Caco-2 (cell line): ENCODE measurements at regions of chr7 and their contacts with region 1.

Region 1: DNA sequence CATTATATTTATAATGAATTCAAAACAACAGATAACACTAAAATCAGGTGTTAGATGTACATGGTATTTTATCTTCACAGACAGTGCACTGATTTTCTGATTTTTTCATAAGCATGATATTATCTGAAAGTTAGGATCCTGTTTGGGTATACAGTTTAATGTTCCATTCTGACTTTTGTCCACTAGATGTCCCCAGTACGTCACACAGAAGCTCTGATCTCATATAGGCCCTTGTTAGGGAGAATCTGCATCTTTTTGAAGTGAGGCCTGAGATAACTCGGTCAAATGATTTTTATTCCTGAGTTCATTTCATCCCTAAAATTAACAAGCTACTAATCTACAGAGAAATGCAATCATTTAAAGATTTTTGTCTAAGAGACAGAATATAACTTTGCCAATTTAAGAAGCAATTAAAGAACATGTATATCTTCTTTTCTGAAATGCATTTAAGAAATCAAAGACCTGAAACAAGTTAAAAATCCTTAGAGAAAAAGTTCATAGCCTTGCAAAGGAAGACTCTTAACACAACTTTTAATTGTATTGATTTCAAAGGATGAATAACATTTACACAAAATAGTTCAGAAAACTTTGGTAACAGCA is 72.0 kb upstream of the TES start:
- DNase-seq: peak; percentile 44 to 69
- H3K4me3 ChIP-seq: no peak overlapping the region
- H3K4me3 Mint-ChIP-seq: no peak overlapping the region
- H3K27ac Mint-ChIP-seq: no peak overlapping the region
- H3K4me1 ChIP-seq: peaks cover 14% of the 10 kb centered on the region; the same call in 1 of the 2 replicates
- H3K4me1 Mint-ChIP-seq: peaks cover 17% of the 10 kb centered on the region
- H3K27me3 ChIP-seq: no peaks in the 10 kb centered on the region
- H3K27me3 Mint-ChIP-seq: no peaks in the 10 kb centered on the region
- CTCF ChIP-seq: peak; percentile 75 to 80

Region 2: DNA sequence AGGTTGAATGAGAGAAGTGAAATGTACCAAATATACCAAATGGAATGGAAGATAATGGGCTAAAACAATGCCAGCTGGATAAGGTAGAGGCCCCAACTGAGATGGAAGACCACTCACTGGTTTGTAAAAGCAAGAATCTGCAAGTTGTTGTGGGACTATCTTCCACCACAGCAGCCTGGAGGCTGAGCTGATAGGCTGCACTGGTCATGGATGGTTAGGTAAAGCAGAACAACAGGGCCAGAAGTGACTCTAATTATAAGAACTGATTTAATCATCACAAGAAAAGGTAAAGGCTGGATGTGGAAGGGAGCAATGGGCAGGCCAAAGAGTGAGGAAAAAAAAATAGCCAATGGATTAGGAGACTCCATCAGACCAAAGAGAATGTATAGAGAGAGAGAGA is 119.6 kb before region 1 on chr7:
- CTCF ChIA-PET with region 1: no interaction called
- POLR2A ChIA-PET with region 1: no interaction called
- intact Hi-C with region 1: no loop called
- DNase-seq: no peak
- H3K4me3 ChIP-seq: no peak overlapping the region
- H3K4me3 Mint-ChIP-seq: no peak overlapping the region
- H3K27ac Mint-ChIP-seq: no peak overlapping the region
- H3K4me1 ChIP-seq: no peaks in the 10 kb centered on the region
- H3K4me1 Mint-ChIP-seq: no peaks in the 10 kb centered on the region
- H3K27me3 ChIP-seq: no peaks in the 10 kb centered on the region
- H3K27me3 Mint-ChIP-seq: no peaks in the 10 kb centered on the region
- CTCF ChIP-seq: no peak

Region 3: DNA sequence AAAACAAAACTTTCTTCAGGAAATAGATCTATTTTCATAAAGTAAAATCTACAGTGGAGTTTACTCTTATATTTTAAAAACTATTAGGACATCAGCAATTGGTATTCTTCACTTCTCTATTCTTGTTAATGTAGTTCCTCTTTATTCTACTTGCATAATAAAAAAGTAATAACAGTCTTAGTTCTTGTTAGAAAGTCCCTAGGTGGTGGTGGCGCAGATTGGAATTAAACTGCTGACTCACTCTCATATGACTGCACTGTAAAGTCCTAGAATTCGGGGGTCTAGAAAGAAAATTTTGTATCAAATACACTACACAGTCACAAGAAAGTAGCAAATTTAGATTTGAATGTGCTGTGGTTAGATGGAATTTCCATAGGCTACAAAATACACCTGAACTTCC is 27.4 kb after region 1 on chr7:
- CTCF ChIA-PET with region 1: no interaction called
- POLR2A ChIA-PET with region 1: no interaction called
- intact Hi-C with region 1: loop called (anchors 1 kb)
- DNase-seq: no peak
- H3K4me3 ChIP-seq: no peak overlapping the region
- H3K4me3 Mint-ChIP-seq: no peak overlapping the region
- H3K27ac Mint-ChIP-seq: no peak overlapping the region
- H3K4me1 ChIP-seq: peaks cover 48% of the 10 kb centered on the region
- H3K4me1 Mint-ChIP-seq: peaks cover 43% of the 10 kb centered on the region
- H3K27me3 ChIP-seq: no peaks in the 10 kb centered on the region
- H3K27me3 Mint-ChIP-seq: no peaks in the 10 kb centered on the region
- CTCF ChIP-seq: no peak

Region 4: DNA sequence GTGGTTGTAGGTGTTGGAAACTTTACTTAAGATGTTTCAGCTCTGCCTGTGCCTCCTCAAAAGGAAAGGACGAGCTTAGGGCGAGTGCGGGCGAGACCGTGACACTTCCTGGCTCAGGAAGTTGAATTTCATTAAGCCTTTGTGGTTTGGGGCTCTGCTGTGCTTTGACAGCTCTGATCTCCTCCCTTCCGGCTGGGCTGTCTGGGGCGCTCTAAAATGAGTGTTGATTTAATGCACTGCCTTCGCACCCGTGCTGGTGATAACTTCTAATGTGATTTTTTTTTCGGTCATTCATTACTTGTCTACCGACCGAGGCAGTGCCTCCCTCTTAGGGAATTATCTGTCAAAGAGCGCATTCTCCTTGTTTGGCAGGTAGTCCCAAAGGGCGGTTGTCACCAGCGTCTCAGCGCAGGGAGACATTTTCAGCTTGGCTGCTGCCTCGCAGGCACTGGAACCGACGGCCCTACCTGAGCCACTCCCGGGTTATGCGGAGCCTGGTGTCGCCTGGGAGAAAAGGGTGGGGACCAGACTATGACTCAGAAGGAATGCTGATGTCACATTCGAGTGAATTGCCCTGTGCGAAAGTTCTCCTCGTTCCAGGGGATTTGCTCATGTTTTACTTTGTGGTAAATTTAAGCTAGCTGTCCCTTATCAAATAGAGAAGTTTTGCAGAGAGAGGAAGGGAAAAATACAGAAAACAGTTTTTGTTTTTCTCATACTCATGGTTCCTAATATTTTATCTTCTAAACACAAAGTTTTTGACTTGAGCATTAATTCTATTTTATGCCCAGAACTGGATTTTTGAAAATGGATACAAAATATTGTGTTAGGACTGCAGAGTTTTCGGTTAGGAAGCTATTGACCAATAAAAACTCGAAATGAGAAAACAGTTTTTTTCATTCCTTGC is 73.0 kb after region 1 on chr7:
- CTCF ChIA-PET with region 1: no interaction called
- POLR2A ChIA-PET with region 1: no interaction called
- intact Hi-C with region 1: loop called (anchors 2 kb)
- DNase-seq: peak; percentile 93 to 95
- H3K4me3 ChIP-seq: peak overlapping the region; percentile 95
- H3K4me3 Mint-ChIP-seq: peak overlapping the region; percentile 97
- H3K27ac Mint-ChIP-seq: peak overlapping the region; percentile 99
- H3K4me1 ChIP-seq: peaks cover 17% of the 10 kb centered on the region
- H3K4me1 Mint-ChIP-seq: peaks cover 26% of the 10 kb centered on the region
- H3K27me3 ChIP-seq: no peaks in the 10 kb centered on the region
- H3K27me3 Mint-ChIP-seq: no peaks in the 10 kb centered on the region
- CTCF ChIP-seq: no peak

Region 5: GRCh38 chr7:116236020-116236630 is 97.8 kb after region 1 on chr7:
- CTCF ChIA-PET with region 1: no interaction called
- POLR2A ChIA-PET with region 1: no interaction called
- intact Hi-C with region 1: loop called (anchors 1 kb)
- DNase-seq: peak in 1 of 2 experiments; percentile 47
- H3K4me3 ChIP-seq: no peak overlapping the region
- H3K4me3 Mint-ChIP-seq: no peak overlapping the region
- H3K27ac Mint-ChIP-seq: no peak overlapping the region
- H3K4me1 ChIP-seq: peaks cover 20% of the 10 kb centered on the region
- H3K4me1 Mint-ChIP-seq: peaks cover 26% of the 10 kb centered on the region
- H3K27me3 ChIP-seq: no peaks in the 10 kb centered on the region
- H3K27me3 Mint-ChIP-seq: no peaks in the 10 kb centered on the region
- CTCF ChIP-seq: peak; percentile 57 to 64

Region 6: GRCh38 chr7:116249708-116250553 is 111.6 kb after region 1 on chr7:
- CTCF ChIA-PET with region 1: no interaction called
- POLR2A ChIA-PET with region 1: no interaction called
- intact Hi-C with region 1: loop called (anchors 1 kb)
- DNase-seq: peak; percentile 42 to 51
- H3K4me3 ChIP-seq: no peak overlapping the region
- H3K4me3 Mint-ChIP-seq: no peak overlapping the region
- H3K27ac Mint-ChIP-seq: no peak overlapping the region
- H3K4me1 ChIP-seq: no peaks in the 10 kb centered on the region
- H3K4me1 Mint-ChIP-seq: no peaks in the 10 kb centered on the region
- H3K27me3 ChIP-seq: no peaks in the 10 kb centered on the region
- H3K27me3 Mint-ChIP-seq: no peaks in the 10 kb centered on the region
- CTCF ChIP-seq: peak; percentile 60 to 65

Region 7: DNA sequence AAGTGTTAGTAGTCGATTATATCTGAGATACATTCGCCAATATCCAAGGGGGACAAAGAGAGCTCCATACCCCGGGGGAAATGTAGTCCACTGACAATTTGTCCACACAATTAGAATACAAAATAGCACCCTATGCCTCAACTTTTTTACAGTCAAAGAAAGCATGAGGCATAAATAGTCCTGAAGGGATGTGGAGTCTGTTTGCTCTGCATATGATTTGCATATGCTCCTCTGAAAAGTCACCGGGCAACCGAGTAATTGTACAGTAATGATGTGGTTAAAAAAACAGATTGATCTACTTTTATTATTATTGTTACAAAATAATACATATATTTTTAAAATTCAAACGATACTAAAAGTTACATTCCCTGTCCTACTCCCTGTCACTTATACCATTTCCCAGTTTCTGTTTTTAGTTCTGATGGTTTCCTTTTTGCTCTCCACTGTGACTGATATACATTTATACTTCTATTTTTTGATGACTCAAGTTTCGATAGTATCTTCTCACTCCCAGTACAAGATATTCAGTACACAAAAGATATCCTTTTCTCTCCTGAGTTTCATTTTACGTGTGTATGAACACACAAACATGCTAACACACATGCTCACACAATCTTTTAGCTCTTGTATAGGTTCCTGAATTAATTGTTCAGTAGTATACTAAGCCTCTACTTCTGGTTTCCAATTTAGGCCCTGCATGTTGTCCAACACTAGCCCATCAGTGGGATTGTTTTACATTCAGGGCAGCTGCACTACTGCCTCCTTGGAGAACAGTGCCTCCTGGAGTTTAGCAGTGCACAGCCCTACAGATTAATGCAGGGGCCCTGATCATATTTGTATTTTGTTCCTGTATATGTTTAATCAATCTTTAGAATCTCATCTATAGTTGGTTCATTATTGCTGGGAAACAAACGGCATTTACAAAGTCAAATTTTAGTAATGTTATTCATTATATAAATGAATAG is 202.9 kb after region 1 on chr7:
- CTCF ChIA-PET with region 1: no interaction called
- POLR2A ChIA-PET with region 1: no interaction called
- intact Hi-C with region 1: no loop called
- DNase-seq: peak in 1 of 2 experiments; percentile 12
- H3K4me3 ChIP-seq: no peak overlapping the region
- H3K4me3 Mint-ChIP-seq: no peak overlapping the region
- H3K27ac Mint-ChIP-seq: no peak overlapping the region
- H3K4me1 ChIP-seq: peaks cover 16% of the 10 kb centered on the region
- H3K4me1 Mint-ChIP-seq: peaks cover 15% of the 10 kb centered on the region
- H3K27me3 ChIP-seq: no peaks in the 10 kb centered on the region
- H3K27me3 Mint-ChIP-seq: no peaks in the 10 kb centered on the region
- CTCF ChIP-seq: peak in 1 of 2 experiments; percentile 23

Region 8: GRCh38 chr7:116525913-116526861 is 387.9 kb after region 1 on chr7:
- CTCF ChIA-PET with region 1: no interaction called
- POLR2A ChIA-PET with region 1: no interaction called
- intact Hi-C with region 1: loop called (anchors 1 kb)
- DNase-seq: peak; percentile 75 to 88
- H3K4me3 ChIP-seq: peak overlapping the region; percentile 60
- H3K4me3 Mint-ChIP-seq: peak overlapping the region; percentile 94
- H3K27ac Mint-ChIP-seq: peak overlapping the region; percentile 52
- H3K4me1 ChIP-seq: peaks cover 10% of the 10 kb centered on the region; the same call in 1 of the 2 replicates
- H3K4me1 Mint-ChIP-seq: no peaks in the 10 kb centered on the region
- H3K27me3 ChIP-seq: no peaks in the 10 kb centered on the region
- H3K27me3 Mint-ChIP-seq: no peaks in the 10 kb centered on the region
- CTCF ChIP-seq: peak; percentile 66 to 91

Region 9: GRCh38 chr7:116560021-116560970 is 422.0 kb after region 1 on chr7:
- CTCF ChIA-PET with region 1: no interaction called
- POLR2A ChIA-PET with region 1: no interaction called
- intact Hi-C with region 1: no loop called
- DNase-seq: no peak
- H3K4me3 ChIP-seq: no peak overlapping the region
- H3K4me3 Mint-ChIP-seq: no peak overlapping the region
- H3K27ac Mint-ChIP-seq: no peak overlapping the region
- H3K4me1 ChIP-seq: no peaks in the 10 kb centered on the region
- H3K4me1 Mint-ChIP-seq: no peaks in the 10 kb centered on the region
- H3K27me3 ChIP-seq: no peaks in the 10 kb centered on the region
- H3K27me3 Mint-ChIP-seq: peaks cover 7% of the 10 kb centered on the region
- CTCF ChIP-seq: no peak